ENCODE measurements at regions of chr19 and their contacts with region 1.

Region 1: GRCh38 chr19:29714953-29715700 is at the start of gene C19orf12:
- DNase-seq: peak; percentile 71
- H3K4me3 ChIP-seq: peak within 1 kb of the TSS; percentile 82
- H3K27ac ChIP-seq: peak within 1 kb of the TSS; percentile 73
- H3K4me1 ChIP-seq: peaks cover 14% of the 10 kb centered on the region
- H3K27me3 ChIP-seq: no peaks in the 10 kb centered on the region
- total RNA-seq, gene C19orf12: 45.7 and 46.8 TPM in 2 replicates

Region 2: DNA sequence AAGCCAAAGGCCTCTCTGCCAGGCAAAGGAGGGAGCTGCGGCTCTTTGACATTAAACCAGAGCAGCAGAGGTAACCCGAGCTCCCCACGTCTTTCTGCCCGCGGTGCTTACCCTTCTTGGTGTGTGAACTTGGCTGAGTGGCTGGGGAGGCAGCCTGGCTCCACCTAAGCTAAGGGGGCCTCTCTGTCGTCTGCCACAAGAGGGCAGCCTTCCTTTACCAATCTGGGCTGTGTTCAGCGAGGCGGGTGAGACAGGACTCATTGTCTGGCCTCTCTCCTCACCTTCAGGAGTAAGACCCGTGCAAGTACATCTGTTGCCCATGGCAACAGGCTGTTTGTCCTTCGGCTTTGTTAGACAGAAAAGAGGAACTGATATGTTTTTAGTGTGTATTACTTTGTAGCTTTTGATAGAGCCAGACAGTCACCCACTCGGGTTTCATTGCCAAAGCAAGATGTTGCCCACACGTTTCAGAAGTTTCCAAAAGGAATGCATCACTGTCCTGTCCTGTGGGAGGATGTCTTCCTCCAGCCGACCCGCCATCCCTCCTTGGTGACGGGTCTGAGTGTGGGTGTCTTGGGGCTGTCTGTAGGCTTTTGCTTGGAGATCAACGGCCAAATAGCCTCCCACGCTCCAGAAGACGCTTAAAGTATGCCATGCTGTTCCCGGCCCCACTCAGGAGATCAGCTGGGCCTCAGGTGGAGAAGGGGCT is 104.4 kb before region 1 on chr19:
- in situ Hi-C with region 1: loop called (anchors 10 kb)
- DNase-seq: peak; percentile 90
- H3K4me3 ChIP-seq: no peak overlapping the region
- H3K27ac ChIP-seq: no peak overlapping the region
- H3K4me1 ChIP-seq: peaks cover 5% of the 10 kb centered on the region; the same call in 1 of the 2 replicates
- H3K27me3 ChIP-seq: no peaks in the 10 kb centered on the region